Activated CD4-positive, alpha-beta T cell treated with anti-CD3 and anti-CD28 coated beads for 36 hours (primary cell): ENCODE measurements at regions of chr5 and their contacts with region 1.

Region 1: DNA sequence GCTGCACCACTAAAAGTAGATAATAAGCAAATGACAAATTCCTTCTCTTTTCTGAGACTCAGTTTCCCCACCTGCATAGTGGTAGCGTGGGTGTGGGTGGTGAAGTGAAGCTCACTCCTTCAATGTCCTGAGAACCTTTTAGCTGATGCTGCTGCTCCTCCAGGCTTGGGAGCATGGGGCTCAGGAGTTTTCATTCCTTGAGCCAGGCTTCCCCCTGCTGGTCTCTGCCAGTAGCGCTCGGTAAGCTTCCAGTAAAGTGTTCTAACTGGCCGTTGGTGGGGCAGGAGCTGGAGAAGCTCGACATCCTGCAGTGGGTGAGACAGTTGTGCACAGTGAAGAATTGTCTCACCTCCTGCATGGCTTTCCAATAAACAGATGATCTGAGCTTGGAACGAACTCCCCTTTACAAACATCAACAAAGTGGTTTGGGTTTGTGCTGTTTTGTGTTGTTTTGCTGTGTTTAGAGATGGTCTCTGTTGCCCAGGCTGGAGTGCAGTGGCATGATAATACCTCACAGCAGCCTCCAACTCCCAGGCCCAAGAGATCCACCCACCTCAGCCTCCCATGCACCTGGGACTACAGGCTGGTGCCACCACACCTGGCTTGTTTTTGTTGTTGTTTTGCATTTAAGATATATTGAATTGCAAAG is 34.6 kb downstream of the SPARC start:
- DNase-seq: peak; percentile 85
- ATAC-seq: peak; percentile 96
- H3K4me3 Mint-ChIP-seq: no peak overlapping the region
- H3K27ac Mint-ChIP-seq: no peak overlapping the region
- H3K4me1 Mint-ChIP-seq: peaks cover 4% of the 10 kb centered on the region
- H3K27me3 Mint-ChIP-seq: no peaks in the 10 kb centered on the region

Region 2: GRCh38 chr5:151315998-151316597 is 336.0 kb before region 1 on chr5:
- CTCF ChIA-PET with region 1: interaction called, 3 read pairs
- POLR2A ChIA-PET with region 1: no interaction called
- intact Hi-C with region 1: loop called in 1 of 2 experiments (anchors 2 kb)
- DNase-seq: peak; percentile 80
- ATAC-seq: peak; percentile 66
- H3K4me3 Mint-ChIP-seq: no peak overlapping the region
- H3K27ac Mint-ChIP-seq: no peak overlapping the region
- H3K4me1 Mint-ChIP-seq: no peaks in the 10 kb centered on the region
- H3K27me3 Mint-ChIP-seq: peaks cover 11% of the 10 kb centered on the region

Region 3: DNA sequence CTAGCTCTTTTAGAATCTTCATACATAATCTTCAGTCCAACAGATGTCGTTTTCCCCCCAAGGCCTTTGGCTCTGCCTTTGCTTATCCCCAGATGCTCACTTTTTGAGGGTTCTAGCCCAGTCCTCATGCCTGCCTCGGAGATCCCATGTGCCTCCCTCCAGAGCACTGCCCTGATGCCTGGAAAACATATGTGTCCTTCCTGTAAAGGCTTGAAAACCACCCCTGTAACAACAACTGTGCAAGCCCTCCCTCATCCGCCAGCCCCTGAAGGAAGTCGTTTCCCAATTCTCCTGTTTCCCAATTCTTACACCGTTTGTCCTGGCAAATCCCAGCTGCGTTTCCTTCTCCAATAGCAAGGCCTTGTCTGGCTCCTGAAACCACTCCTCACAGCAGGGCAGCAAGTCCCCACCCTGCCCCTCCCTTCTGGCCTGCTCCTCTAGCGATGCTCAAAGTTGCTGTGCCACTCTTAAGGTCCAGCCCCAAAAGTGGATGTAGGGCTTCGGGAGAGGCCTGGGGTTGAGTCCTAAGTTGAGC is 152.6 kb before region 1 on chr5:
- CTCF ChIA-PET with region 1: interaction called, 3 read pairs
- POLR2A ChIA-PET with region 1: no interaction called
- intact Hi-C with region 1: loop called (anchors 1 to 2 kb)
- DNase-seq: no peak
- ATAC-seq: no peak
- H3K4me3 Mint-ChIP-seq: no peak overlapping the region
- H3K27ac Mint-ChIP-seq: no peak overlapping the region
- H3K4me1 Mint-ChIP-seq: peaks cover 4% of the 10 kb centered on the region
- H3K27me3 Mint-ChIP-seq: no peaks in the 10 kb centered on the region

Region 4: GRCh38 chr5:151523335-151523734 is 128.8 kb before region 1 on chr5:
- CTCF ChIA-PET with region 1: interaction called, 17 read pairs
- POLR2A ChIA-PET with region 1: no interaction called
- intact Hi-C with region 1: loop called (anchors 1 to 5 kb)
- DNase-seq: peak; percentile 67
- ATAC-seq: peak; percentile 98
- H3K4me3 Mint-ChIP-seq: no peak overlapping the region
- H3K27ac Mint-ChIP-seq: no peak overlapping the region
- H3K4me1 Mint-ChIP-seq: peaks cover 3% of the 10 kb centered on the region
- H3K27me3 Mint-ChIP-seq: no peaks in the 10 kb centered on the region

Region 5: GRCh38 chr5:151612689-151613427 is 39.3 kb before region 1 on chr5:
- CTCF ChIA-PET with region 1: interaction called, 20 read pairs
- POLR2A ChIA-PET with region 1: no interaction called
- intact Hi-C with region 1: loop called in 1 of 2 experiments (anchors 1 kb)
- DNase-seq: peak; percentile 80
- ATAC-seq: peak; percentile 83
- H3K4me3 Mint-ChIP-seq: peak overlapping the region; percentile 43
- H3K27ac Mint-ChIP-seq: peak overlapping the region; percentile 83
- H3K4me1 Mint-ChIP-seq: peaks cover 46% of the 10 kb centered on the region
- H3K27me3 Mint-ChIP-seq: no peaks in the 10 kb centered on the region

Region 6: GRCh38 chr5:151637676-151638075 is 14.4 kb before region 1 on chr5:
- CTCF ChIA-PET with region 1: interaction called, 12 read pairs
- POLR2A ChIA-PET with region 1: interaction called, 4 read pairs
- intact Hi-C with region 1: no loop called
- DNase-seq: no peak
- ATAC-seq: no peak
- H3K4me3 Mint-ChIP-seq: no peak overlapping the region
- H3K27ac Mint-ChIP-seq: no peak overlapping the region
- H3K4me1 Mint-ChIP-seq: no peaks in the 10 kb centered on the region
- H3K27me3 Mint-ChIP-seq: peaks cover 2% of the 10 kb centered on the region

Region 7: DNA sequence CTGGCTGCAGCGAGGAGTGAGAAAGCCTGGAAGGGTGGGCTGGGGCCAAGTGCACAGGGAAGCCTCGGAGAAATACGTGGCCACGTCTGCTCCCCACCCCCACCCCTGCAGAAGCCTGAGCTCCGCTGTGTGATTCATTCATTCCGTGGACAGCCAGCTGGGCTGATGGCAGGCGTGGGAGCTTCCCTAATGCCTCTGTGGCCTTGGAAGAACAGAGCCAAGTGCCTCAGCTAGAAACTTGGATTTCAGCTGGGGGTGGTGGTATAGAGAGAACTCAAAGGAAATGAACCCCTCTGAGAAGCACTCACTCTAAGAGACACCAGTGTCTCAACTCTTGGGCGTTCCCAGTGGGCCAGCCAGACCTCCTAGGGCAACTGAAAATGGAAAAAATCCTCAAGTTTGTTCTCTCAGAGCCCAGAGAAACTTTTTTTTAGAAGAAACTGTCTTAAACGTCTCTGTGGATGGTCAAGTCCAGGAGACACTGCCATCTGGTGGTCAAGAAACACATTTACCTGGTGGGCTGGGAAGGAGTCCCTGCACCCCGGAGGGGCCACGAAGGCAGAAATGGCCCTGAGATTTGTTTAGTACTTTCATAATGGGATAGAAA is 88.3 kb after region 1 on chr5:
- CTCF ChIA-PET with region 1: interaction called, 45 read pairs
- POLR2A ChIA-PET with region 1: no interaction called
- intact Hi-C with region 1: no loop called
- DNase-seq: peak; percentile 65
- ATAC-seq: peak; percentile 72
- H3K4me3 Mint-ChIP-seq: no peak overlapping the region
- H3K27ac Mint-ChIP-seq: no peak overlapping the region
- H3K4me1 Mint-ChIP-seq: peaks cover 14% of the 10 kb centered on the region
- H3K27me3 Mint-ChIP-seq: no peaks in the 10 kb centered on the region

Region 8: GRCh38 chr5:151896031-151896691 is 244.0 kb after region 1 on chr5:
- CTCF ChIA-PET with region 1: no interaction called
- POLR2A ChIA-PET with region 1: no interaction called
- intact Hi-C with region 1: no loop called
- DNase-seq: no peak
- ATAC-seq: no peak
- H3K4me3 Mint-ChIP-seq: no peak overlapping the region
- H3K27ac Mint-ChIP-seq: no peak overlapping the region
- H3K4me1 Mint-ChIP-seq: peaks cover 2% of the 10 kb centered on the region
- H3K27me3 Mint-ChIP-seq: peaks cover 2% of the 10 kb centered on the region